ENCODE measurements at regions of chr12 and their contacts with region 1.

Region 1: DNA sequence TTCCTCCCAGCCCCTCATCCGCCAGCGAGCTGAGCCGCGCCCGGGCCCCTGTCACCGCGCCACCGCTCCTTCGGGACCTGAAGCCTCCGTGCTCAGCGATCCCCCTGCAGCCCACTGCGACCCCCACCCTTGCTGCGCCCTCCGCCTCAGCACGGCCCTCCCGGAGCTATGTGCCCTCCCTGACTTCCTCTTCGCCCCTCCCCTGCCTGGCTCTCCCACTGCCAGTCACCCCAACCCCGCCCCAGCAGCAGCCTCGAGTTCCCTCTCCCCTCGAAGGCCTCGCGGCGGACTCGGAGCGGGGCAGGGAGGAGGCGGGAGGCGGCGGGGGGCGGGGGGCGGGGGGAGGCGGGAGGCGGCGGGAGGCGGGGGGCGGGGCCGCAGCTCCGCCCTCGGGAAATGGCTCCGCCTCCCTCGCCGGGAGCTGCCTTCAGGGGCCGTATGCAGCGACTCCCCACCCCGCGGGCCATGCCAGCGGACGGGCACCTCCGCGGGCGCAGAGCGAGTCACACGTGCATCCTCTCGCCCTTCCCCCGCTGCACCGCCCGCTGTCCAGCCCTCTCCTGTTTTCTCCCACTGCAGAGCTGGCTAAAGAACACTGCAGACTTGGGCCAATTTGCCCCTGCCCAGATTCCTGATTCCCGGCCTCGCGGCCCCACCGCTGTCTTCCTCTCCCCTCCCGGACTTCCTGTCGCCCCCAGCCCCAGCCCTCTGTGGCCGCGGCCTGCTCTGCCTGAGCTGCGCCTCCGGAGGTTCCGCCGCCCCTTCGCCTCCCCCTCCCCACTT is 29.1 kb upstream of the ADIPOR2 start:
- DNase-seq: peak; percentile 88
- H3K4me3 Mint-ChIP-seq: peak overlapping the region; percentile 71
- H3K27ac Mint-ChIP-seq: peak overlapping the region; percentile 61
- H3K4me1 Mint-ChIP-seq: peaks cover 33% of the 10 kb centered on the region
- H3K27me3 Mint-ChIP-seq: no peaks in the 10 kb centered on the region

Region 2: DNA sequence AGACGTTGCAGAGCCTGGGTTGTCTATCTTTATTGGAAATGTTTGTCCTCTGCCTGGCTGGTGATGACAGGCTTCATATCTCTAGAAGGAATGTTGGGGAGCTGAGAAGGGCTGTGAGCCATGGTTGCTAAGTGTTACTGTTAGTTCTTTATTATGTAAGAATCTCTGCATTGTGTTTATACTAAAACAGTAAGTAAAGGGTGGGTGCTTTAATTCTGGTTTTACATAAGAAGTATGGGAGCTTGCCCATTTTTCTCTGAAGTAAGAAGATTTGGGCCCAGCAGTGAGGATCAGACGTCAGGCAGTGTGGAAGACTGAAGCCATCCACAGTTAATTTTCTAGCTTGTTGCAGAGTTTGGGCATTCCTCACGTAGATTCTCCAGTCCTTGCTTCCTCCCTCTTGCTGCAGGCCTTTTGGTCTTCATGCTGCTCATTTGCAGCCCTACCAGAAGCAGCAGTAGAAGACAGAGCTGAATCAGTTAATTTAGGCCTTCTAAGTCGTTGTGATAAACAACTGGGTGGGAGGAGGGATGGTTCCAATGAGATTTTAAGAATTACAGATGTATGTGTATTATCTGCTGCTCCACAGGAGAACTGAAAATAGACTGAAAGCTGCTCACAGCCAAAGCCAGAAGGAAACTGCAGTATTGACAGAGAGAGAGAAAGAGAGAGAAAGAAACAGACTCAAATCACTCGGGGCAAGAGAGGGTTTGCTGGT is 11.3 kb before region 1 on chr12:
- CTCF ChIA-PET with region 1: interaction called, 14 read pairs
- intact Hi-C with region 1: no loop called
- DNase-seq: no peak
- H3K4me3 Mint-ChIP-seq: no peak overlapping the region
- H3K27ac Mint-ChIP-seq: no peak overlapping the region
- H3K4me1 Mint-ChIP-seq: peaks cover 1% of the 10 kb centered on the region
- H3K27me3 Mint-ChIP-seq: peaks cover 2% of the 10 kb centered on the region

Measured in activated naive CD4-positive, alpha-beta T cell treated with anti-CD3 and anti-CD28 coated beads for 36 hours (primary cell).